Dorsolateral prefrontal cortex (tissue), 120 donors: ENCODE measurements at regions of chr13 and their contacts with region 1.

Region 1: GRCh38 chr13:43786773-43787517 is at the start of gene ENOX1:
- DNase-seq: peak; percentile 55 to 90 (median 86)
- H3K4me3 ChIP-seq: peak within 1 kb of the TSS; percentile 26 to 94 (median 85)
- H3K27ac ChIP-seq: peak within 1 kb of the TSS; percentile 52 to 97 (median 92)
- H3K27me3 ChIP-seq: no peaks in the 10 kb centered on the region
- CTCF ChIP-seq: peak; percentile 31 to 73 (median 50)
- total RNA-seq, gene ENOX1: 13.5 to 35.9 (median 25.1) TPM

Region 2: GRCh38 chr13:43085545-43085944 is 701.4 kb before region 1 on chr13:
- intact Hi-C with region 1: loop called (anchors 5 kb)
- DNase-seq: no peak
- H3K4me3 ChIP-seq: no peak overlapping the region
- H3K27ac ChIP-seq: peak overlapping the region in 2 of 59 donors; percentile 3 to 12
- H3K27me3 ChIP-seq: no peaks in the 10 kb centered on the region
- CTCF ChIP-seq: peak; percentile 59 to 92 (median 77)

Region 3: DNA sequence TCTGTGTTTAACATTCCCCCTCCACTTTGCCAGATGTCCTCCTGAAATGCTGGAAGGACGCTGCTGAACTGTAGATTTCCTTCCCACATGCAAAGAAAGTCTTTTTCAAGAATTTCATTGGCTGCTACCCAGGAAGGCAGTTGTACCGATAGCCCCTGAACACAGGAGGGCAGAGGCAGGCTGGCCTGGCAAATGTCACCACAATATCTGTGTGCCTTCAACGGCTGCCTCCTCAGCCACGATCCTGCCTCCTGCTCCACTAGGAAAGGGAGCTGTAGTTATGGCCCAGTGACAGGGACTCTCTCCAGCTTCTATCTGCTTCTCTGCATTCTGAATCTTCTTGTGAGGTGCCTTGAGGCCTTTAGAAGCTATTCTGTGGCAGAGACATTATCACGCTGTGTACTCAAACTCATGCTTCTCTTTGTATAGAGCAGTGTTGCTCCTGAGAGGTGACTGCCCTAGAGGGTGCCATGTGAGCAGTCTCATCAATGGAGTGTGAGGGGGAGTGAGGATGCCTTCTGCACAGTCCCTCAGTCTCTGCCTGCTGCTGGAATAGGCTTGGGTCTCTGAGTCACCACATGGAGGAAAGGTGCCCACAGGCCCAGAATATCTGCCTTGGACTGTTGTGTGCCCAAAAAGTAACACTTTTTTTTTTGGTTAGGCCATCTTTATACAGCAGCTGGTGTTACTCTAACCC is 483.8 kb before region 1 on chr13:
- intact Hi-C with region 1: loop called (anchors 2 to 5 kb)
- DNase-seq: peak; percentile 20 to 74 (median 70)
- H3K4me3 ChIP-seq: no peak overlapping the region
- H3K27ac ChIP-seq: peak overlapping the region in 52 of 59 donors; percentile 5 to 85 (median 62)
- H3K27me3 ChIP-seq: no peaks in the 10 kb centered on the region
- CTCF ChIP-seq: peak; percentile 13 to 77 (median 58)

Region 4: GRCh38 chr13:43567608-43568007 is 219.3 kb before region 1 on chr13:
- intact Hi-C with region 1: loop called (anchors 10 kb)
- DNase-seq: no peak
- H3K4me3 ChIP-seq: no peak overlapping the region
- H3K27ac ChIP-seq: peak overlapping the region in 7 of 59 donors; percentile 4 to 79 (median 21)
- H3K27me3 ChIP-seq: no peaks in the 10 kb centered on the region
- CTCF ChIP-seq: no peak

Region 5: DNA sequence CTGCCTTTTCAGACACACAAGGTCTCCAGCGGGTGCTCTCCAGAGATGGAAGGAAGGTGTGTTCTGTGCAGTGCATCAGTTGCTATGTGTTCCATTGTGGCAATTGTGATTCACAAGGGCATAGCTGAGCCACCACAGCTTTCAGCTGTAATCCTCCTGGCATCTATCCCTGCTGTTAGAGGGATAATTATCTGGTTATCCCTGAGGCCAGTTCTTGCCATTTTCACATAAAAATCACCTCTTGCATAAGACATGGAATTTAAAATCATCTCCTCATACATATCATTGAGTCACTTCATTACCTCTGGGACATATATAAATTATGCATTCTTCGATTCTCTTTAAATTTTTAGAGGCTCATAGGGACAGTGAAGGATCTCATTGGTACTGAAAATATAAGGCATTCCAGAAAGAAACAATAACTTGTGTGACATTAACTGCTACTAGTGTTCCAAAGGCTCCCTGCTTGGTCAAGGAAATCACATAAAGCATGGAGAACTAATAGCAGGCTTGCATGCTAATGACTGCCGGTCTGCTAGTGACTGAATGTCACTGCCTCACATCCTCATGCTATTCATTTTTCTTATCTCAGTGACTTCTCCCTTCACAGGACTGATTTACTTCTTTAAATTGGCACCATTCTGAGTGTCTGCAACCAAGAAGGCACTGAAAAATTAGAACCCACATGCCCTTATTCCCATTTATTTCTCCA is 214.1 kb before region 1 on chr13:
- intact Hi-C with region 1: loop called (anchors 10 kb)
- DNase-seq: no peak
- H3K4me3 ChIP-seq: no peak overlapping the region
- H3K27ac ChIP-seq: peak overlapping the region in 18 of 59 donors; percentile 0 to 65 (median 30)
- H3K27me3 ChIP-seq: no peaks in the 10 kb centered on the region
- CTCF ChIP-seq: no peak

Region 6: DNA sequence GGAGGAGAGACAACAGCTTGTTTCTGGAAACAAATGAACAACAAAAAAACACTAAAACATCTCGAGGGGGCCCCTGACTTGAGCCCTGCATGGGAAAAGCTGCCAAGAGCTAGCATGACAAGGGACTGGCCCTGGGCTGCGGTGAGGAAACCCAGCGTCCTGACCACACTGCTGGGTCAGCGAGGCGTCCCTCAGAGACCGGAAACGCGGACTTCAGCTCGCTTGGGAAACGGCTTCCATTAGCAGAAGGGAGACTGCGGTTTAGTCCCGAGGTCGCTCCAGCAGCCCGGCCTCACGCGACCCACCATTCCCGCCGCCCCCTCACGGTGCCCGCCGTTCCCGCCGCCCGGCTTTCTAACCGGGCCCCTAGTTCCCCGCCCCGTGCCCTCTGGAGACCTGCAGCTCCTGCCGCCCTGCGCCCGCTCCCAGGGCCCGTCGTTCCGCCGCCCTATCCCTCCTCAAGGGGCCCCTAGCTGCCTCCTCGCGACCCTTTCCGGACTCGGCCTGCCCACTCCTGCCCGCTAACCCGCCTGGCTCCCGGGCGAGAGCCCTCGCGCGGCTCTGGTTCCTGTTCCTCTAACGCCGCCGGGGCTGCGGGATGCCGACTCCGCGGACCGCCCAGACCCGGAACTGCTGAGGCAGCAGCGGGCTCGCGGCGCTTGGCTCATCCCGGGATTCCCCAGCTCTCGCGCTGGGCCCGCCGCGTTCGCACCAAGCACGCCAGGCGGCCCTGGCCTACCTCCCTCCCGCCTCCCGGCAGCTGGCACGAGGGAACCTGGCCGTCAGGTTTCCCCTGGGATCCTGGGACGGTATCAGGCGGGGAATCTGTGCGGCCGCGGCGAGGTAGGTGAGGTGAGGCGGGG is 92.2 kb after region 1 on chr13 and contains the start of gene CCDC122:
- intact Hi-C with region 1: loop called (anchors 1 to 5 kb)
- DNase-seq: peak; percentile 49 to 82 (median 66)
- H3K4me3 ChIP-seq: peak within 1 kb of the TSS; percentile 50 to 90 (median 77)
- H3K27ac ChIP-seq: peak within 1 kb of the TSS; percentile 84 to 99 (median 97)
- H3K27me3 ChIP-seq: no peaks in the 10 kb centered on the region
- CTCF ChIP-seq: peak in 14 of 56 donors; percentile 5 to 32 (median 16)
- total RNA-seq, gene CCDC122: 0.69 to 15.7 (median 5.3) TPM